Dendritic cell treated with granulocyte-macrophage colony-stimulating factor and Interleukin-4, amounts not matched to agents 40 ng/mL and 50 ng/mL, for 4 days (primary cell): ENCODE measurements at regions of chr1 and their contacts with region 1.

Region 1: DNA sequence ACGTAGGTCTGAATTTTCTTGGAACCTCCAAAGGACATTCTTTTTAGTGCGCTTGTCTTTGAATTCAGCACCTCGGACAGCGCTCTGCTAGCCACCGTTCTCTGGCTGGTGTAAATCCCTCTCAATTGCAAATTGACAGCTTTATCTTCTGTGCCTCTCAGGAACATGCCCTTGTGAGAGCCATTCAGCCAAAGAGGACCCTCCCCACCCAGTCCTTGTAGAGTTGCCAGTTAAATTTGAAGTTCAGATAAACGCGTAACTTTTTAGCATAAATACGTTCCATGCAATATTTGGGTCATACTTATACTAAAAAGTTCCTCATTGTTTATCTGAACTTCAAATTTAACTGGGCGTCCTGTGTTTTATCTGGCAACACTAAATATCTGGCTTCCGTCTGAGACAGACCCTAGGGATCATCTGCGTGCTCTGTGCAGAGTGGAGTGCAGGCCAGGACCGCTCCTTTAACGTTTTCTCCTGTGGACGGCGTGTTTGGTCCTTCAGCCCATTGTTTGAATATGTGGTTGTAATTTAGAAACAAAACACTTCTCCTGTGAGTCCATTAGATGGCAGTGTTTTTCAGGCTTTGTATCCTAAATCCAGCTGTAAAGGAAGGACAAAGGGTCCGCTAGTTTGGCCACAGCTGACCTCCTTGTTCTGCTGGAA is 7.0 kb downstream of the KCNAB2 start:
- H3K4me3 Mint-ChIP-seq: no peak overlapping the region
- H3K27ac Mint-ChIP-seq: peak overlapping the region; percentile 30
- H3K4me1 Mint-ChIP-seq: peaks cover 71% of the 10 kb centered on the region
- H3K27me3 Mint-ChIP-seq: no peaks in the 10 kb centered on the region

Region 2: DNA sequence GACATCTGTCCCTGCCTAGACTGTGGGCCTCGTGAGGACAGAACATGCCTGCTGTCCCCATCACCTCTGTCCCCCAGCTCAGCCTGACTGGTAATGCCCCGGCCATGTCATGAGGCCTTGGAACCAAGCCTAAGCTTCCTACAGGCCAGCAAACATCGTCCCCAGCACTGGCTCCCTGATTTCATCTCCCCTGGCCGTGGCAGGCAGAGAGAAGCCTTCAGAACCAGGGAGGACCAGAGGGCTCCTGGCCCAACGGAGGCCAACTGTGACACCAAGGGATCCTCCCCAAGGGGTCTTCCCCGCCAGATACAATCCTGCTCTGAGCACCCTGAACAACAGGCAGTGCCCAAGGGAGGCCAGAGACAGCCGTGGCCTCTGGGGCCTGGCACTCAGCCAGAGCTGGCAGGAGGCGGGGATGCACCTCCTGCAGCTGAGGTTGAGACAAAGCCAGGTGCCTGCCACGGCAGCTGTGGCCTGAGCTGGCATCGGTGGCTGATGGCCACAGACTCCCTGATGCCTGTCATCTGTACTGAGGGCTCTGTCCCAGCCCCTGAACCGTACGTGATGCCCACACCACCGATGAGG is 50.6 kb before region 1 on chr1:
- intact Hi-C with region 1: no loop called
- H3K4me3 Mint-ChIP-seq: no peak overlapping the region
- H3K27ac Mint-ChIP-seq: no peak overlapping the region
- H3K4me1 Mint-ChIP-seq: peaks cover 1% of the 10 kb centered on the region
- H3K27me3 Mint-ChIP-seq: no peaks in the 10 kb centered on the region

Region 3: GRCh38 chr1:6123083-6123482 is 70.4 kb after region 1 on chr1:
- intact Hi-C with region 1: loop called (anchors 2 kb)
- H3K4me3 Mint-ChIP-seq: no peak overlapping the region
- H3K27ac Mint-ChIP-seq: no peak overlapping the region
- H3K4me1 Mint-ChIP-seq: peaks cover 25% of the 10 kb centered on the region
- H3K27me3 Mint-ChIP-seq: peaks cover 24% of the 10 kb centered on the region

Region 4: DNA sequence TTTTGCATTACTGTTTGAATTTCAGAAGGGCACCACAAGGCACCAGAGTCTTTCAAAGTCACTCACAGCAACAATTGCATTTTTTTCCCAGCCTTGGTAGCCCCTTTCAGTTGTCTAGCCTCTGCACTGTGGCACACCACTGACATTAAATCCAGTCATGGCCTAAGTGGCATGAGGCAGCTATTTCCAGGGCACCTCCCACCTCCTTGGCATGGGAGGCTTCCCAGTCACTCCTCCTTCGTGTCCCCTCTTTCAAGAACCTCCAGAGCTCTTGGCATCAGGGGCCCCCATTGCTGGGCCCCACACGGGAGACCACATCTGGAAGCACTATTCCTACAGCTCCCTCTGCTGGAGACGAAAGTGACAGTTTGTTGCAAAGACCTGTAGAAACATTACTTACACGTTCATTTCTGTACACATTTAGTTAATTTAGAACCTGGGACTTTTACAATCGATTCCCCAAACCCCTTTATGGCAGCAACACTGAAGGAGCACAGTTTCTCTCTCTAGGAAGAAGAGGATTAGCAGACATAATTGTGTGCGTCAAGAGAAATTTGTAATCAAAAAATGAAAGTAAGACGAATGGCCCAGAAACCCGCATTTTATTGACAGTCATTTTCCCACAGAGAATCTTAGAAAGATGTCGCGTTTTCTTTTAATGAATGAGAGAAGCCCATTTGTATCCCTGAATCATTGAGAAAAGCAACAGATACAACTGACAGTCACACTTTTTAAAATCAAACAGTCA is 133.1 kb after region 1 on chr1:
- intact Hi-C with region 1: loop called (anchors 10 kb)
- H3K4me3 Mint-ChIP-seq: no peak overlapping the region
- H3K27ac Mint-ChIP-seq: no peak overlapping the region
- H3K4me1 Mint-ChIP-seq: peaks cover 14% of the 10 kb centered on the region
- H3K27me3 Mint-ChIP-seq: peaks cover 30% of the 10 kb centered on the region

Region 5: DNA sequence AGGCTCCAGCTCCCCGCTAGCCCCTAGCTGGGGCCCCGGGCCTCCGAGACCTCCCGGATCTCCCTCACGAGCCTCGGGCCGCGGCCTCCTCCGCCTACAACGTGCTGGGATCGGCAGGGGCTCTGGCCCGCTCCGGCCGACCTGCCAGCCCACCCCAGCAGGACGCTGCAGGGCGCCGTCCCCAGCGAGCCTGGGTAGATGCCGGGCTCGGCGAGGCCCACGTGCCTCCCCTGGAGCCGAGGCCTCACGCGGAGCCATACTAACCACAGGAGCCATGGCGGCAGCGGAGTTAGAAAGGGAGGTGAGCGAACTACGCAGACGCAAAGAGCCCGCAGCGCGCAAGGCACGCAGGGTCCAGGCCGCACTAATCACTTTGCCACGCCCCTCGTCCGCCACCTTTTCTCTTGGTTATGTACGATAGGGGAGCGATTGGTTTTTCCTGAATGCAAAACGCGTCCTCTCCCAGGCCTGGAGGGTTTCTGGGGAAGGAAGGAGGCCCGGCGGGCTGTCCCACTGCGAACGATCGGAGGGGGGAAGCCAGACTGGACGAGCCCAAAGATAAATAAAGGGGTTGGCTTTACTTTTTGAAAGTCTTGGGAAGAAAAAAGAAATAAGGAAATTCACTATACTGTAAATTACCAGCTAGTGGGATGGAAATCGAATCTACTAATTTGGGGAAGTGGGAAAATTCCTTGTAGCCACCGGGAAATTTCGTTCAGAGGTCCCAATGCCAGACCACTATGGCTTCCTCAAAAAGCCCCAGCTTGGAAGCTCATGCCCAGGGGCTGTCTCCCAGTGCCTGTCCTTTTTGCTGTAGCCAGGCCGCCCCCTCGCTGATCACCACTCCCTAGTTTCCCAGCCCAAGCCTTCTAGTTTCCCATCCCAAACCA is 146.9 kb after region 1 on chr1 and contains the start of gene RPL22:
- intact Hi-C with region 1: no loop called
- H3K4me3 Mint-ChIP-seq: peak within 1 kb of the TSS; percentile 79
- H3K27ac Mint-ChIP-seq: peak within 1 kb of the TSS; percentile 95
- H3K4me1 Mint-ChIP-seq: peaks cover 33% of the 10 kb centered on the region
- H3K27me3 Mint-ChIP-seq: peaks cover 24% of the 10 kb centered on the region